H1 (cell line): ENCODE measurements at regions of chr16 and their contacts with region 1.

Region 1: DNA sequence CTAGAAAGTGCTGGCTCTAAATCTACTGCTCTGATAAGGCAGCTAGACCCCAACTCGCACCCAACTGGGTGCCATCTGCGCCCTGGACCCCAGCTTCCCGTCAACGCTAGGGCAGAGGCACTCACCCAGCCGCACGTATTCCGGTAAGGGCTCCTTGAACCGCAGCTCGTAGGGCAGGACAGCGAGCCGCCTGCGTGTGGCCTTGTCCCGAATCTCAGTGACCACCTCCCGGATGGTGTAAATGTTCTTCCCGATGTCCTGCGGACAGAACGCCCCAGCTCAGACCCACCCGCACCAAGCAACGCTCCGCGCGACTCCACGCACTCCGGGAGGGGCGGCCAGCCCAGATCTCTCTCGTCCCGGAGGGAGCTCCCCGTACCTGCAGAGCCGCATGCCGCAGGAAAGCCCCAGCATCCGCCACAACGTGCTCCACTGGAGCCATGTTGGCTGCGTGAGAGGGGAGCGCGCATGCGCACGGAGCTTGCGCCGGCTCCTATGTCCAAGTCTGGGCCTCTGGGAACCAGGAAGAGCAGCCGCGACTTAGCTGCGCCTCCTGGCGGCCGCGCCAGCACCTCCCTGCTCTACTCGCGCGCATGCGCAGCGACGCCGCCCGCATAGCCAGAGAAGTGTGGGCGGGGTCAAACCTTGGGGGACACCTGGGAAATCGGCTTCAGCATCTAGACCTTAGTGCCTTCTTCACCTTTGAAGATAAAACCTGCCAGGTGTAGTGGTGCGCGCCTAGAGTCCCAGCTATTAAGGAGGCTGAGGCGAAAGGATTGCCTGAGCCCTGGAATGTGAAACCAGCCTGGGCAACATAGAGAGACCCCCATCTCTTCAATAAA is at the start of gene NOB1:
- DNase-seq: peak; percentile 98 to 99
- H3K4me3 ChIP-seq: peak within 1 kb of the TSS; percentile 69 to 100 (median 96)
- H3K27ac ChIP-seq: peak within 1 kb of the TSS; percentile 92
- H3K4me1 ChIP-seq: no peaks in the 10 kb centered on the region
- H3K27me3 ChIP-seq: no peaks in the 10 kb centered on the region
- CTCF ChIP-seq: peak; percentile 91 to 100 (median 95)
- EP300 ChIP-seq: no peak
- POLR2A ChIP-seq: peak; percentile 96 to 98
- RAD21 ChIP-seq: peak; percentile 74 to 82
- total RNA-seq, gene NOB1: 88.2 and 92.5 TPM in 2 replicates

Region 2: DNA sequence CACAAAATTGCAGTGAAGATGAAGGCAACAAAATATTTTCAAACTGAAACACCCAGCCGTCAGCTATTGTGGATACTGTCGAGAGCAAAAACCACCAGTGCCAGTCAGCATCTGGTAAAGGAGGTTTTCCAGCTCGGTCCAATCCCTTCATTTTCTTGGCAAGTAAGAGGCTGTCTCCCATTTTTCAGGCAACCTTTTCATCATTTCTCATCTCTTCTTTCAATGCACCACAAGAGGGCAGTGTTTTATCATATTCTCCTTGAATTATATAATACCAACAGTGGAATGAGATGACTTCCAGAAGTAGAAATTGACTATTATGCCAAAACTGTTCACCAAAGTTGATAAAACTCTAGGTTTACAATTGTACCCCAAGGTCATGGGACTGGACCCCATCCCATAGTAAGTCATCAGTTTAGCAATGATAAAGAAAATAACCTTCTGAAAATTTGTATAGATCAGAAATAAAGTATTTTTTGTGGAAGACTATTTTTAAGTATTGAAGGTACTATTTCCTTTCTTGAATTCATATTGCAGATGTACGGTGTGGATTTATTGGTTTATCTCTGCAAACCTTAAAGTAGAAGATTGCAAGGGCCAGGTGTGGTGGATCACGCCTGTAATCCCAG is 45.1 kb before region 1 on chr16:
- CTCF ChIA-PET with region 1: interaction called, 20 read pairs
- POLR2A ChIA-PET with region 1: interaction called, 18 read pairs
- DNase-seq: peak in 1 of 2 experiments; percentile 38
- H3K4me3 ChIP-seq: no peak overlapping the region
- H3K27ac ChIP-seq: no peak overlapping the region
- H3K4me1 ChIP-seq: no peaks in the 10 kb centered on the region
- H3K27me3 ChIP-seq: no peaks in the 10 kb centered on the region
- CTCF ChIP-seq: peak in 2 of 3 experiments; percentile 41 to 67; a peak in 2 of 4 replicates
- EP300 ChIP-seq: no peak
- POLR2A ChIP-seq: no peak
- RAD21 ChIP-seq: peak; percentile 74 to 75

Region 3: GRCh38 chr16:69720822-69721430 is 33.8 kb before region 1 on chr16:
- CTCF ChIA-PET with region 1: interaction called, 17 read pairs
- POLR2A ChIA-PET with region 1: interaction called, 83 read pairs
- DNase-seq: peak in 1 of 2 experiments; percentile 27
- H3K4me3 ChIP-seq: no peak overlapping the region
- H3K27ac ChIP-seq: no peak overlapping the region
- H3K4me1 ChIP-seq: peaks cover 0 to 7% (median 0%) of the 10 kb centered on the region in 4 experiments; a peak in 4 of 7 replicates
- H3K27me3 ChIP-seq: no peaks in the 10 kb centered on the region
- CTCF ChIP-seq: no peak
- EP300 ChIP-seq: no peak
- POLR2A ChIP-seq: no peak
- RAD21 ChIP-seq: no peak

Region 4: GRCh38 chr16:69726296-69727060 is 28.2 kb before region 1 on chr16 and contains the start of gene NQO1:
- CTCF ChIA-PET with region 1: interaction called, 17 read pairs
- POLR2A ChIA-PET with region 1: interaction called, 83 read pairs
- DNase-seq: peak; percentile 90 to 96
- H3K4me3 ChIP-seq: peak within 1 kb of the TSS; percentile 49 to 65 (median 60)
- H3K27ac ChIP-seq: peak within 1 kb of the TSS; percentile 88
- H3K4me1 ChIP-seq: peaks cover 3 to 7% (median 6%) of the 10 kb centered on the region in 4 experiments; a peak in 6 of 7 replicates
- H3K27me3 ChIP-seq: no peaks in the 10 kb centered on the region
- CTCF ChIP-seq: no peak
- EP300 ChIP-seq: no peak
- POLR2A ChIP-seq: no peak; a peak in 1 of 3 replicates
- RAD21 ChIP-seq: no peak
- total RNA-seq, gene NQO1: 45.3 and 45.7 TPM in 2 replicates

Region 5: DNA sequence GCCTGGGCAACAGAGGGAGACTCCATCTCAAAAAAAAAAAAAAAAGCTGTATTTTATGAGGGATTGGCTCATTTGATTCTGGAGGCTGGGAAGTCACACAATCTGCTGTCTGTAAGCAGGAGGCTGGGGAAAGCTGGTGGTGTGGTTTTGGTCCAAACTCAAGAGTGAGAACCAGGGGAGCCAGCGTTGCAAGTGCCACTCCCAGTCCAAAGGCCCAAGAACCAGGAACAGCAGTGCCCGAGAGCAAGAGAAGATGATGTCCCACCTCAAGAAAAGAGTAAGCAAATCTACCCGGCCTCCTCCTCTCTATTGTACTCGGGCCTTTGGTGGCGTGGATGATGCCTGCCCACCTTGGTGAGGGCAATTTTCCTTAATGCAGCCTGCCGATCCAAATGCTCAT is 22.6 kb before region 1 on chr16:
- CTCF ChIA-PET with region 1: interaction called, 17 read pairs
- POLR2A ChIA-PET with region 1: interaction called, 83 read pairs
- DNase-seq: no peak
- H3K4me3 ChIP-seq: no peak overlapping the region
- H3K27ac ChIP-seq: no peak overlapping the region
- H3K4me1 ChIP-seq: peaks cover 0 to 6% (median 4%) of the 10 kb centered on the region in 4 experiments; a peak in 3 of 7 replicates
- H3K27me3 ChIP-seq: no peaks in the 10 kb centered on the region
- CTCF ChIP-seq: no peak
- EP300 ChIP-seq: no peak
- POLR2A ChIP-seq: no peak
- RAD21 ChIP-seq: no peak

Region 6: DNA sequence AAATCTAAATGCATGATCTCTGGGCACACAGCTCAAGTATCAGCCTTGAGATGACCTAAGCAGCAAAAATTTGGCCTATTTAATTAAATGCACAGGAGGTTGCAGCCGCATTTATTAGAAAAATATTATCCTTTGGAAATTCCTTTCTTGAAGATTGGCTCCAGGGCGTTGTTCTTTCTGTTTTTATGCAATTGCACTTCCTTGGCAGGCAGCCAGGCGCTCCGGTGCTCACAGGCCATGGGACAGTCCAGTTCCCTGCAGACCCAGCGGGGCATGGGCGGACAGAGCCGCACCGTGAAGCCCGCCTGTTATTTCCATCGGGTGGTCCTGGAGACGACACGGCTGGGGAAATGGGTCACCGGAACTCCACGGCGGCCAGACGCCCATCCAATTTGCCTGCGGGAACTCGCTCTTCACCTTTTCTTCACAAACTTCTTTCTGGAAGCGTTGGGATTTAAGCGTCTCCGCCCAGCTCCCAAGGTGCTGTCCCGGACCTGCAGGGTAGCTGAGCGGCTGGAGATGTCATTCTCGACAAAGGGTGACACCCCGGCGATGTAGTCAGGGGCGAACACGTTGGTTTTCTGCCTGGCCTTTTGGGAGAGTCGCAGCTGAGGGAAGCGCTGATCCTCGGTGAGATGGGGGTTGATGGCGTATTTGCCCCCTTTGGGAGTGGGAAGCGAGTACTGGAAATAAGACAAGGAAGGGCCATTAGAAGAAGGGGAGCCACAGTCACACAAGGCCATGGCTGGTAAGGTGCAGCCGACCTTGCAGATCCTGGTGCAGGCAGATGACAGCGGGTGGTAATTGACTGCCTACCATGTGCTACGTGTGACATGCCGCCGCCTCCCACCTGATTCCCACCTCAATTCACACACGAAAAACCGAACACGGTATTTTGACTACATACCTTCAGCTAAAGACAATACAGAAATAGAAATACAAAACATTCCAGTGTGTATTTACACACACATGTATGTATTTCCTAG is 12.5 kb before region 1 on chr16:
- CTCF ChIA-PET with region 1: interaction called, 16 read pairs
- POLR2A ChIA-PET with region 1: interaction called, 14 read pairs
- DNase-seq: no peak
- H3K4me3 ChIP-seq: no peak overlapping the region
- H3K27ac ChIP-seq: no peak overlapping the region
- H3K4me1 ChIP-seq: no peaks in the 10 kb centered on the region
- H3K27me3 ChIP-seq: no peaks in the 10 kb centered on the region
- CTCF ChIP-seq: no peak
- EP300 ChIP-seq: no peak
- POLR2A ChIP-seq: no peak
- RAD21 ChIP-seq: no peak

Region 7: DNA sequence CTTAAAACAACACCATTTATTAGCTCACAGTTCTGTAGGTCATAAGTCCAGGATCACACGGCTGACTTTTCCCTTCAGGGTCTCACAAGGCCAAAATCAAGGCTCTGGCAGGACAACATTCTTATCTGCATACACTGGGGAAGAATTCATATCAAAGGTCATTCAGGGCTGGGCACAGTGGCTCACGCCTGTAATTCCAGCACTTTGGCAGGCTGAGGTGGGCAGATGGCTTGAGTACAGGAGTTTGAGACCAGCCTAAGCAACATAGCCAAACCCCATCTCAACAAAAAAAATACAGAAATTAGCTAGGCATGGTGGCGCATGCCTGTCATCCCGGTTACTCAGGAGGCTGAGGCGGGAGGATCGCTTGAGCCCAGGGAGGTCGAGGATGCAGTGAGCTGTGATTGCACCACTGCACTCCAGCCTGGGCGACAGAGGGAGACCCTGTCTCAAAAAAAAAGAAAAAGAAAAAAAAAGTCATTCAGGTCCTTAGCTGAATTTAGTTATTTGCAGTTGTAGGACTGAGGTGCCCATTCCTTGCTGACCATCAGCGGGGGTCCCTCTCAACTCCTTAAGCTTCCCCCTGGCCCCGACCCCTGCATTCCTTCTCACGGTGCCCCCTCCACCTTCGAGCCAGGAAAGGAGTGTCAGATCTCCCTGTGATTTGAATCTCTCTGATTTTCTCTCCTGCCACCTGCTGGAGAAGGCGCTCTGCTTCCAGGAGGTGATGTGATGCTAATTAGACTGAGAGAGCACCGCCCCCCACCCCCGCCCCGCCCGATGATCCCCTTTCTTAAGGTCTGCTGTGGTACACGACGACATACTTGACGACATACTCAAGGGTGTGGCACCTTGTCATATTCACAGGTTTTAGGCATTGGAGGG is 104.7 kb after region 1 on chr16:
- CTCF ChIA-PET with region 1: no interaction called
- POLR2A ChIA-PET with region 1: no interaction called
- DNase-seq: peak; percentile 25 to 76
- H3K4me3 ChIP-seq: no peak overlapping the region
- H3K27ac ChIP-seq: no peak overlapping the region
- H3K4me1 ChIP-seq: no peaks in the 10 kb centered on the region
- H3K27me3 ChIP-seq: no peaks in the 10 kb centered on the region
- CTCF ChIP-seq: peak; percentile 39 to 55 (median 52)
- EP300 ChIP-seq: no peak
- POLR2A ChIP-seq: no peak
- RAD21 ChIP-seq: peak; percentile 37 to 55; a peak in 3 of 4 replicates